GM23248 (cell line): ENCODE measurements at regions of chr5 and their contacts with region 1.

Region 1: GRCh38 chr5:177599731-177600507 is at the start of gene B4GALT7:
- DNase-seq: peak; percentile 94
- H3K4me3 ChIP-seq: peak within 1 kb of the TSS; percentile 85
- H3K27ac ChIP-seq: peak within 1 kb of the TSS; percentile 73
- H3K4me1 ChIP-seq: peaks cover 8% of the 10 kb centered on the region
- H3K27me3 ChIP-seq: no peaks in the 10 kb centered on the region
- total RNA-seq, gene B4GALT7: 42.7 and 53.5 TPM in 2 replicates

Region 2: DNA sequence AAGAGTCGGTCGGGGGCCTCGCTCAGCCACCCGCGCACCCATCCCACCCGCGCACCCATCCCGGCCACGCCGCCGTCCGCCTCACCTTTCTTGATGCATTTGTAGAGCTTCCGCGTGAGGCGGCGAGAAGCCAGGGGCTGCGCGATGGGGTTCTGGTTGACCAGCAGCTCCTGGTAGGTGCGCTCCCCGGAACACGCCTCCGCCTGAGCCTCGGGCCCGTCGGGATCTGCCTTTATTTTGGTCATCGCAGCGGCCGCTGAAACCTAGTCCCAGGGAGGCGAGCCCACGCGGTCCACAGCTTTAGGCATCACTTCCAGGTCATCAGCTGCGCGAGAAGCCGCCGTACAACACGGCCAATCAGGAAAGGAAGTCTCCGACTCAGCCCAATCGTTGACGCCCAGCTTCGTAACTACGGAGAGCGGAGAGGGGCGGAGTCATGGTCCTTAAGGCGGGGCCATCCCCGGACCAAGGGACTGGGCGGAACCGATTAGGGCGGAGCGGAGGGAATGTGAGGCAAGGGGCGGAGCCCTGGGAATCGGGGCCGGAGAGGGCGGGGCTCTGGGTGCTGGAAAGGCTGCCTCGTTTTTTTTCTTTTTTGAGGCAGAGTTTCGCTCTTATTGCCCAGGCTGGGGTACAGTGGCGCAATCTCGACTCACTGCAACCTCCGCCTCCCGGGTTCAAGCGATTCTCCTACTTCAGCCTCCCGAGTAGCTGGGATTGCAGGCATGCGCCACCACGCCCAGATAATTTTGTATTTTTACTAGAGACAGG is 553.8 kb after region 1 on chr5 and contains the start of gene NHP2:
- in situ Hi-C with region 1: loop called (anchors 25 kb)
- DNase-seq: peak; percentile 100
- H3K4me3 ChIP-seq: peak within 1 kb of the TSS; percentile 88
- H3K27ac ChIP-seq: peak within 1 kb of the TSS; percentile 65
- H3K4me1 ChIP-seq: peaks cover 8% of the 10 kb centered on the region; the same call in 1 of the 2 replicates
- H3K27me3 ChIP-seq: no peaks in the 10 kb centered on the region
- total RNA-seq, gene NHP2: 203 and 221 TPM in 2 replicates